ENCODE measurements at regions of chr1 and their contacts with region 1.

Region 1: GRCh38 chr1:185681034-185681633 is 53.1 kb upstream of the HMCN1 start:
- DNase-seq: peak; percentile 54
- ATAC-seq: peak; percentile 67
- H3K4me3 Mint-ChIP-seq: no peak overlapping the region
- H3K27ac Mint-ChIP-seq: no peak overlapping the region
- H3K4me1 Mint-ChIP-seq: peaks cover 28% of the 10 kb centered on the region
- H3K27me3 Mint-ChIP-seq: peaks cover 6% of the 10 kb centered on the region

Region 2: DNA sequence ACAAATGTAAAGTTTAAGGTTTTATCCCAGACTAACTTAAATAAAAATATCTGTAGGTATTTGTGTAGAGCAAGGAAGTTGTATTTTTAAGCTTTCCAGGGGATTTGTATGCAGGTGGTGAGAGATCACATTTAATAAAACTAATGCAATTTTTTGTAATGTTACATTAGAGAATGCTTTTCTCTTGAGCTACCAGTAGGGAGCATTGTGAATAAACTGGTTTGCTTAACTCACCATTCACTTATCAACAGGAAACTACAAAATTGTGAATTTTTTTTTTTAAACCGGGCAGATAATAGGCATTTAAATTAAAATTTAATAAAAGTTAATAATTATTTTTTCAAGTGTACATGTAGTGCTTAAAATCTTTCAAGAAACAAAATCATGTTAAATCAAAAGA is 442.7 kb before region 1 on chr1:
- CTCF ChIA-PET with region 1: interaction called, 26 read pairs
- POLR2A ChIA-PET with region 1: no interaction called
- DNase-seq: no peak
- ATAC-seq: no peak
- H3K4me3 Mint-ChIP-seq: no peak overlapping the region
- H3K27ac Mint-ChIP-seq: no peak overlapping the region
- H3K4me1 Mint-ChIP-seq: peaks cover 17% of the 10 kb centered on the region
- H3K27me3 Mint-ChIP-seq: no peaks in the 10 kb centered on the region

Region 3: DNA sequence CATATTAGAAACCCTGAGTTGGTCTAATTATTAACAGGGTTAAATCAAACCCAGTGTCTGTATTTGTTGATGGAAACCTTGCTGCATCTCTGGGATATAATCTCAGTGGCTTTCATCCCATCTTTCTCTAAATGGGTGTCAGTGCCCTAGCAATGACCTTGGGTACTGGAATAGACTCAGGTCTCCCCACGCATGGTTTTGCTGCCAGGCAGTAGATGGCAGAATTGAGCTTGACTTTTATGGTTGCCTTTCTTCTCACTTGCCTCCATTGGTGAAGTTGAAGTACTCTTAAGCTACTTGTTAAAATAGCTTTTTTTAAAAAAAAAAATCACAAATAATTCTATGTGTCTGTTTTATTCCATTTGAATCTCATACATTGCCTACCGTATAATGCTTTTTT is 28.8 kb before region 1 on chr1:
- CTCF ChIA-PET with region 1: interaction called, 25 read pairs
- POLR2A ChIA-PET with region 1: no interaction called
- DNase-seq: no peak
- ATAC-seq: no peak
- H3K4me3 Mint-ChIP-seq: no peak overlapping the region
- H3K27ac Mint-ChIP-seq: no peak overlapping the region
- H3K4me1 Mint-ChIP-seq: peaks cover 10% of the 10 kb centered on the region
- H3K27me3 Mint-ChIP-seq: no peaks in the 10 kb centered on the region

Region 4: GRCh38 chr1:185694081-185694480 is 12.9 kb after region 1 on chr1:
- CTCF ChIA-PET with region 1: interaction called, 20 read pairs
- POLR2A ChIA-PET with region 1: no interaction called
- DNase-seq: peak; percentile 63
- ATAC-seq: peak; percentile 53
- H3K4me3 Mint-ChIP-seq: peak overlapping the region; percentile 65
- H3K27ac Mint-ChIP-seq: peak overlapping the region; percentile 89
- H3K4me1 Mint-ChIP-seq: peaks cover 18% of the 10 kb centered on the region
- H3K27me3 Mint-ChIP-seq: peaks cover 12% of the 10 kb centered on the region

Region 5: GRCh38 chr1:185720633-185721272 is 39.6 kb after region 1 on chr1:
- CTCF ChIA-PET with region 1: no interaction called
- POLR2A ChIA-PET with region 1: no interaction called
- DNase-seq: no peak
- ATAC-seq: no peak
- H3K4me3 Mint-ChIP-seq: no peak overlapping the region
- H3K27ac Mint-ChIP-seq: no peak overlapping the region
- H3K4me1 Mint-ChIP-seq: no peaks in the 10 kb centered on the region
- H3K27me3 Mint-ChIP-seq: peaks cover 19% of the 10 kb centered on the region

Measured in activated CD8-positive, alpha-beta T cell treated with anti-CD3 and anti-CD28 coated beads, Interleukin-2, amount 10 ng/mL, durations not matched to agents 7 days and 5 days (primary cell).